ENCODE measurements at regions of chr21 and their contacts with region 1.

Region 1: GRCh38 chr21:38712071-38712470 is 93.7 kb upstream of the ETS2 start:
- DNase-seq: peak; percentile 11
- H3K4me3 Mint-ChIP-seq: no peak overlapping the region
- H3K27ac Mint-ChIP-seq: no peak overlapping the region
- H3K4me1 Mint-ChIP-seq: no peaks in the 10 kb centered on the region
- H3K27me3 Mint-ChIP-seq: no peaks in the 10 kb centered on the region
- CTCF ChIP-seq: no peak

Region 2: GRCh38 chr21:38505654-38506515 is 206.2 kb before region 1 on chr21:
- CTCF ChIA-PET with region 1: interaction called, 3 read pairs
- intact Hi-C with region 1: loop called (anchors 5 kb)
- DNase-seq: peak; percentile 33
- H3K4me3 Mint-ChIP-seq: no peak overlapping the region
- H3K27ac Mint-ChIP-seq: no peak overlapping the region
- H3K4me1 Mint-ChIP-seq: no peaks in the 10 kb centered on the region
- H3K27me3 Mint-ChIP-seq: peaks cover 32% of the 10 kb centered on the region
- CTCF ChIP-seq: peak; percentile 21

Region 3: DNA sequence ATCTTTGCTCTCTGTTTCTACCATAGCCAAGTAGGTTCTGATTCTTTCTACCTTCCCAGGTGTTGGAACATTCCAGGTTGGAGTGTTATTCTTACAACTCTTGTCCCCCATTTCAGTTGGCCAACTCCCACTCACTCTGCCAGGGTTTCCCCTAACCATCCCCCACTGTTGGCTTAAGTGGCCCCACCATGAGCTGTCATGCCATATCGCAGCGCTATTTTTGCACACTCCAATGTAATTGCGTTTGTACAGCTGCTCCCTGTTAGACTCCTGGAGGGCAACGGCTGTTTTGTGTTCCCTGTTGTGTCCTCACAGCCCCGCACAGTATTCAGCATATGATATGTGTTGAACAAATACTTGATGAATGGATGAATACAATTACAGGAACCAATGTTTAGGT is 24.0 kb before region 1 on chr21:
- CTCF ChIA-PET with region 1: no interaction called
- intact Hi-C with region 1: no loop called
- DNase-seq: no peak
- H3K4me3 Mint-ChIP-seq: no peak overlapping the region
- H3K27ac Mint-ChIP-seq: no peak overlapping the region
- H3K4me1 Mint-ChIP-seq: no peaks in the 10 kb centered on the region
- H3K27me3 Mint-ChIP-seq: peaks cover 56% of the 10 kb centered on the region
- CTCF ChIP-seq: no peak

Measured in Calu3 (cell line).